CD8-positive, alpha-beta T cell (primary cell): ENCODE measurements at regions of chr1 and their contacts with region 1.

Region 1: GRCh38 chr1:185156854-185157598 is at the starts of genes SWT1 and TRMT1L:
- DNase-seq: peak; percentile 96 to 99 (median 98)
- ATAC-seq: peak; percentile 89
- H3K4me3 ChIP-seq: peak within 1 kb of the TSS; percentile 75 to 97
- H3K4me3 Mint-ChIP-seq: peak within 1 kb of the TSS; percentile 99
- H3K27ac ChIP-seq: peak within 1 kb of the TSS; percentile 86 to 98
- H3K27ac Mint-ChIP-seq: peak within 1 kb of the TSS; percentile 99
- H3K4me1 ChIP-seq: peaks cover 17% of the 10 kb centered on the region
- H3K4me1 Mint-ChIP-seq: peaks cover 49% of the 10 kb centered on the region
- H3K27me3 ChIP-seq: no peaks in the 10 kb centered on the region
- H3K27me3 Mint-ChIP-seq: no peaks in the 10 kb centered on the region
- CTCF ChIP-seq: no peak
- total RNA-seq, gene SWT1: 3.0 to 3.9 TPM
- total RNA-seq, gene TRMT1L: 3.0 to 5.1 TPM

Region 2: DNA sequence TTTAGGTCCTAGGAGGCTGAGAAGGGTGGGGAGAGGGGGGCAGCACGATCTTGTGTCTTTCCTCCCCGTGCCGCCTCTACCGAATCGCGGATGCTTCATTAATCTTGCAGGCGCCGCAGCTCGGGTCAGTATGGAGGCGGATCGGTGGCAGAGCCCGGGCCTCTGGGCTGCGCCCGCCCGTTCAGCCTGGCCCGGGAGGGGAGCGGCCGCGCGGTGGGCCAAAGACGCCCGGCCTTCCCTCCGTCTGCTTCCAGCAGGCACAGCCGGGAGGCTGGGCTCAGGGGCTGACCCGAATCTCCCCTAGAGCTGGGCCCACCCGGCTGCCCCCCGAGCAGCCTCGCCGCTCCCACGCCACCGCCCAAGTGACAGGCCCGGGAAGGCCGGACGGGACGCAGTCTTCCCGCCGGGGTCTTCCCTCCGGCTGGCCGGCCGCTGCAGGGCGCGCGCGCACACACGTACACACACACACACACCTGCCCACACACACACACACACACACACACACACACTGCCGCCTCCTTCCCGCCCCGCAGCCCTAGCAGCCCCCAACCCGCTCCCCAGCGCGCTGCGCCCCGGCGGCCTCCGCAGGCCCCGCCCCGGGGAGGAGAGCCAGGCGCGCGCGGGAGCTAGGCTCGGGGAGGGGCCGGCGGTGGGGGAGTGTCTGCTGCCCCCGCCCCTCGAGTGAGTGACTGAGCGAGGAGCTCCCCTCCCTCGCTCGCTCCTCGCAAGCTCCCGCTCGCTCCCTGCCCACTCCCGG is 770.5 kb before region 1 on chr1 and contains the start of gene C1orf21:
- CTCF ChIA-PET with region 1: no interaction called
- POLR2A ChIA-PET with region 1: no interaction called
- intact Hi-C with region 1: loop called in 1 of 2 experiments (anchors 5 kb)
- DNase-seq: peak; percentile 40 to 89 (median 66)
- ATAC-seq: peak; percentile 83
- H3K4me3 ChIP-seq: peak within 1 kb of the TSS; percentile 59 to 74
- H3K4me3 Mint-ChIP-seq: peak within 1 kb of the TSS; percentile 84
- H3K27ac ChIP-seq: peak within 1 kb of the TSS; percentile 63 to 88
- H3K27ac Mint-ChIP-seq: peak within 1 kb of the TSS; percentile 83
- H3K4me1 ChIP-seq: peaks cover 10% of the 10 kb centered on the region
- H3K4me1 Mint-ChIP-seq: peaks cover 18% of the 10 kb centered on the region
- H3K27me3 ChIP-seq: peaks cover 2 to 7% of the 10 kb centered on the region in 2 experiments
- H3K27me3 Mint-ChIP-seq: peaks cover 38% of the 10 kb centered on the region
- CTCF ChIP-seq: no peak
- total RNA-seq, gene C1orf21: 2.3 to 3.5 TPM

Region 3: GRCh38 chr1:184973272-184974055 is 183.6 kb before region 1 on chr1:
- CTCF ChIA-PET with region 1: no interaction called
- POLR2A ChIA-PET with region 1: no interaction called
- intact Hi-C with region 1: loop called in 1 of 2 experiments (anchors 10 kb)
- DNase-seq: peak in 8 of 9 experiments; percentile 2 to 89 (median 34)
- ATAC-seq: peak; percentile 48
- H3K4me3 ChIP-seq: peak overlapping the region; percentile 65 to 93
- H3K4me3 Mint-ChIP-seq: peak overlapping the region; percentile 96
- H3K27ac ChIP-seq: peak overlapping the region; percentile 52 to 82
- H3K27ac Mint-ChIP-seq: peak overlapping the region; percentile 89
- H3K4me1 ChIP-seq: peaks cover 14% of the 10 kb centered on the region
- H3K4me1 Mint-ChIP-seq: peaks cover 51% of the 10 kb centered on the region
- H3K27me3 ChIP-seq: no peaks in the 10 kb centered on the region
- H3K27me3 Mint-ChIP-seq: peaks cover 26% of the 10 kb centered on the region
- CTCF ChIP-seq: no peak

Region 4: GRCh38 chr1:185083818-185084217 is 73.2 kb before region 1 on chr1:
- CTCF ChIA-PET with region 1: no interaction called
- POLR2A ChIA-PET with region 1: no interaction called
- intact Hi-C with region 1: no loop called
- DNase-seq: no peak
- ATAC-seq: no peak
- H3K4me3 ChIP-seq: no peak overlapping the region
- H3K4me3 Mint-ChIP-seq: no peak overlapping the region
- H3K27ac ChIP-seq: no peak overlapping the region
- H3K27ac Mint-ChIP-seq: no peak overlapping the region
- H3K4me1 ChIP-seq: no peaks in the 10 kb centered on the region
- H3K4me1 Mint-ChIP-seq: peaks cover 43% of the 10 kb centered on the region
- H3K27me3 ChIP-seq: no peaks in the 10 kb centered on the region
- H3K27me3 Mint-ChIP-seq: no peaks in the 10 kb centered on the region
- CTCF ChIP-seq: no peak

Region 5: GRCh38 chr1:185170291-185170848 is 13.3 kb after region 1 on chr1:
- CTCF ChIA-PET with region 1: interaction called, 17 read pairs
- POLR2A ChIA-PET with region 1: interaction called, 4 read pairs
- intact Hi-C with region 1: loop called in 1 of 2 experiments (anchors 1 kb)
- DNase-seq: peak in 7 of 9 experiments; percentile 23 to 76 (median 53)
- ATAC-seq: peak; percentile 93
- H3K4me3 ChIP-seq: no peak overlapping the region
- H3K4me3 Mint-ChIP-seq: peak overlapping the region; percentile 42
- H3K27ac ChIP-seq: no peak overlapping the region
- H3K27ac Mint-ChIP-seq: peak overlapping the region; percentile 10
- H3K4me1 ChIP-seq: no peaks in the 10 kb centered on the region
- H3K4me1 Mint-ChIP-seq: peaks cover 3% of the 10 kb centered on the region
- H3K27me3 ChIP-seq: no peaks in the 10 kb centered on the region
- H3K27me3 Mint-ChIP-seq: no peaks in the 10 kb centered on the region
- CTCF ChIP-seq: peak; percentile 80

Region 6: DNA sequence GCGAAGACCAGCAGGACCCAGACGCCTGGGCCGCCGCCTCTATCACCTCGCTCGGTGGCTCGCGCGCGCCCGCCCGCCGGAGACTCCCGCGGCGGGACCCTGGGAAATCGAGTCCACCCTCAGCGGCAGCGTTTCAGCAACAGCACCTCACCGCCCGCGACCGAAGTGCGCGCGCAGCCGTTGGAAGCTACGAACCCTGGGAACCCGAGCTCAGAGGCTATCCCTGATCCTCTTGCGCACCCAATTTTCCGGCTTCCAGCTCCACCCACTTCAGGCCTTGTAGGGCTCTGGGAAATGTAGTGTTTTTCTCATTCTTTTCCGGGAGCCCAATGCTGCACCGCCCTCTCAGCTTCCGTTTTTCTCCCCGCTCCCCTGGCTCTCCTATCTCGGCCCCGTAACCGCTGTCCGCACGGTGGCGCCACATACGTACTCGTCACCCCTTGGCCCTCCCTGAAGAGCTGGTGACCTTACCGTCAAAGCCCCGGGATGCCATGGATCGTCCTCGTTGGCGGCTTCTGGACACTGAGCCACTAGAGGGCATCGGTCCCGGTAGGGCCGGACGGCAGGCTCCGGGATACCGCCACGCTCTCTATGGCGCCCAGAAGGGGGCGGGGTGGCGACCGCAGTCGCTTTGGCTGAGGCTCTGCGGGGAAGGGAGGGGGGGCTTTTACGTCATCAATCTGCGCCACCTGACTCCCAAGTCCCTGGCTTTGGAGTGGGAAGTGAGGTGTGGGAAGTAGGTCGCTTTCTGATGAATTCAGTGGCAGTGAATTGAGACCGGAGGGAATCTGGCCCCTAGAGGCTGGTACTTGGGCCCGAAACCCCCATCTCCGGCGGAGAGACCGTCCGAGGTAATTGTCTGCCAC is 1218.3 kb after region 1 on chr1 and contains the starts of genes ODR4 and TPR:
- CTCF ChIA-PET with region 1: interaction called, 3 read pairs
- POLR2A ChIA-PET with region 1: interaction called, 5 read pairs
- intact Hi-C with region 1: loop called in 1 of 2 experiments (anchors 2 kb)
- DNase-seq: peak; percentile 91 to 99 (median 95)
- ATAC-seq: peak; percentile 89
- H3K4me3 ChIP-seq: peak within 1 kb of the TSS; percentile 65 to 82
- H3K4me3 Mint-ChIP-seq: peak within 1 kb of the TSS; percentile 98
- H3K27ac ChIP-seq: peak within 1 kb of the TSS; percentile 92 to 96
- H3K27ac Mint-ChIP-seq: peak within 1 kb of the TSS; percentile 97
- H3K4me1 ChIP-seq: peaks cover 24% of the 10 kb centered on the region
- H3K4me1 Mint-ChIP-seq: peaks cover 43% of the 10 kb centered on the region
- H3K27me3 ChIP-seq: no peaks in the 10 kb centered on the region
- H3K27me3 Mint-ChIP-seq: no peaks in the 10 kb centered on the region
- CTCF ChIP-seq: peak; percentile 66
- total RNA-seq, gene ODR4: 25.4 to 28.7 TPM
- total RNA-seq, gene TPR: 89.3 to 98.0 TPM